Posterior vena cava (tissue), 2 donors: ENCODE measurements at regions of chr9 and their contacts with region 1.

Region 1: DNA sequence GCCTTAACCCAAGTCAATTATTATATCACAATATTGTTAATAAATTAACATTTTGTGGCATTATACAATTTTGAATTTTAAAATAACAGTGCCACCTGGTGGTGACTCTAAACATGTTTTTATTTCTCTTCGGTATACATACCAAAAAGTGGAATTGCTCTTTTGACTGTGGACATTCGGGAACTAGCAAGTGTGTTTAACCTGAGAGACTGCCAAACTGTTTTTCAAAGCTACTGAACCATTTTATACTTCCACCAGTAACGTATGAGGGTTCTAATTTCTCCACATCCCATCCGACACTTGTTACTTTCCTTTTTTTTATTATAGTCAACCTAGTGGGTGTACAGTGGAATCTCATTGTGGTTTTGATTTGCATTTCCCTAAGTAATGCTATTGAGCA is 18.3 kb upstream of the HSDL2 start:
- DNase-seq: no peak

Region 2: DNA sequence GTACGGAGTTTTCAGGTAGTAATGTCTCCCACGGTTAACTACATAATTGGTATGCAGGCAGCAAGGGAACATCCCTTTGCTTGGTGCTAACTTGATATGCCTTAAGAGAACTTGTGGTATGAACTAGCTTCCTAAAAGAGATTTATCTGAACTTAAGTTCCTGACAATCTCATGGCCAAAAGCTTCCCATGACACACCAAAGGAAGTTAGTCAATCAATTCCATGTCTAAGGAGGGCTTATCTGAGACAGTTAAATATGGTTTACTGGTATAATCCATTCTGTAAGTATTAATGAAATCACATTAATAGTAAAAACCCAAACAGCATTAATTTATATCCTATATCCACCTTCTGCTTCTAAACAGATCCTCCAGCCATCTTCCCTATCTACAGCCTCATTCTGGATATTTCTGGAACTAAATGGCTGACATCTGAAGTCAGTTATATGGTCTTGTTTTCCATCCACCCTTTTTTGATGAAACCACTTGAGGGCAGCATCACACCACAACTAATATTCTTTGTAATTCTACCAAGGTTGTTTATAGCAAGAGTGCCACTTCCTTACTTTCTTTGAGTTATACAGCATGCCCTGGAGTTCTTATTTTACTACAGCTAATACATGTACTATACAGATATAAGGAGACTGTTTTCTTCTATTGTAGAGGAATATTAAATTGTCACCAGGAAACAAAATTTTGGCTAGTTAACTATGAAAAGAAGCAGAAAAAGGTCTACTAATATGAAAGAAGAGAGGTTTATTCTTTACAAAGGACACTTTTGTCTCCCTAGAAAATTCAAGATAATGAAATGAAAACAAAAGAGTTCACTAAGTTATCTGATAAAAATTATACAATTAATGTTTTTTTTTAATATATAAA is 601.6 kb before region 1 on chr9:
- intact Hi-C with region 1: loop called in 1 of 2 experiments (anchors 10 kb)
- DNase-seq: no peak

Region 3: GRCh38 chr9:111896353-111896958 is 465.1 kb before region 1 on chr9 and contains the start of gene UGCG:
- intact Hi-C with region 1: no loop called
- DNase-seq: peak; percentile 97
- total RNA-seq, gene UGCG: 21.0 to 32.7 TPM

Region 4: DNA sequence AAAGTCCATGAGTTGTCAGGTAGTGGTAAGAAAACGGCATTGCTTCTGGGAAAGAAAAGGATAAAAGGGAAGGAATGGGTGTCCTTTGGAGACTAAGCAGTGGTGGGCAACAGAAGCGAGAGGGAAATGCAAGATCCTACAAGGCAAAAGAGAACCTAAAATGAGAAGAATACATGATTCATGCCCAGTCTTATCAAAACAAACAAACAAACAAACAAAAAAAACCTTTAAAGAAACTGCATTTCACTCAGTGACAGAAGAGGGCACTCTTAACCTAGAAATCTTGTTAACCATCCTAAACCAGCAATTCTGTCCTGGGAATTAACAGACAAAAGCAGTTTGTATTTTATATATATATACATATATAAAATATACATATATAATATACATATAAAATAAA is 275.0 kb before region 1 on chr9:
- intact Hi-C with region 1: loop called in 1 of 2 experiments (anchors 5 kb)
- DNase-seq: no peak

Region 5: GRCh38 chr9:112097712-112098688 is 263.6 kb before region 1 on chr9:
- intact Hi-C with region 1: loop called in 1 of 2 experiments (anchors 5 kb)
- DNase-seq: peak; percentile 84

Region 6: GRCh38 chr9:112288029-112288428 is 73.6 kb before region 1 on chr9:
- intact Hi-C with region 1: no loop called
- DNase-seq: no peak